Caco-2 (cell line): ENCODE measurements at regions of chr6 and their contacts with region 1.

Region 1: DNA sequence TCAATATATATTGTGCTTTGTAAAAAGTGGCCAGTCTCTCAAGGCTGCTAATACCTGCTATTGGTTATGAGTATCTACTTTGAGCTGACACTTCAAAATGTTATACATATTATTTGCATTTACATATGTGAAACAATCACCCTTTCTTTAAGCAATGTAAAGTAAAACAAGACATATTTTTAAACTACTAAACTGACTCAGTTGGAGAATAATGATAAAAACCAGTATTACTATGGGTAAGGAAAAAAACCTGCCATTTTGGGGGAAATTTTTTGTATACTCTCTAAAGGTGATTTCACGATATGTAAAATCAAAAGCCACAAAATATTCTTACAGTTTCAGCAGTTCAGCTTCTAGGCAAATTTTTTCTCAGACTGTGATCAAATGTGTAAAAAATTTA is 232.3 kb downstream of the PRL start:
- DNase-seq: no peak
- H3K4me3 ChIP-seq: no peak overlapping the region
- H3K4me3 Mint-ChIP-seq: no peak overlapping the region
- H3K27ac Mint-ChIP-seq: no peak overlapping the region
- H3K4me1 ChIP-seq: no peaks in the 10 kb centered on the region
- H3K4me1 Mint-ChIP-seq: no peaks in the 10 kb centered on the region
- H3K27me3 ChIP-seq: no peaks in the 10 kb centered on the region
- H3K27me3 Mint-ChIP-seq: no peaks in the 10 kb centered on the region
- CTCF ChIP-seq: no peak

Region 2: GRCh38 chr6:22017272-22017671 is 47.3 kb before region 1 on chr6:
- CTCF ChIA-PET with region 1: no interaction called
- POLR2A ChIA-PET with region 1: no interaction called
- intact Hi-C with region 1: no loop called
- DNase-seq: no peak
- H3K4me3 ChIP-seq: no peak overlapping the region
- H3K4me3 Mint-ChIP-seq: no peak overlapping the region
- H3K27ac Mint-ChIP-seq: no peak overlapping the region
- H3K4me1 ChIP-seq: no peaks in the 10 kb centered on the region
- H3K4me1 Mint-ChIP-seq: no peaks in the 10 kb centered on the region
- H3K27me3 ChIP-seq: no peaks in the 10 kb centered on the region
- H3K27me3 Mint-ChIP-seq: no peaks in the 10 kb centered on the region
- CTCF ChIP-seq: no peak

Region 3: DNA sequence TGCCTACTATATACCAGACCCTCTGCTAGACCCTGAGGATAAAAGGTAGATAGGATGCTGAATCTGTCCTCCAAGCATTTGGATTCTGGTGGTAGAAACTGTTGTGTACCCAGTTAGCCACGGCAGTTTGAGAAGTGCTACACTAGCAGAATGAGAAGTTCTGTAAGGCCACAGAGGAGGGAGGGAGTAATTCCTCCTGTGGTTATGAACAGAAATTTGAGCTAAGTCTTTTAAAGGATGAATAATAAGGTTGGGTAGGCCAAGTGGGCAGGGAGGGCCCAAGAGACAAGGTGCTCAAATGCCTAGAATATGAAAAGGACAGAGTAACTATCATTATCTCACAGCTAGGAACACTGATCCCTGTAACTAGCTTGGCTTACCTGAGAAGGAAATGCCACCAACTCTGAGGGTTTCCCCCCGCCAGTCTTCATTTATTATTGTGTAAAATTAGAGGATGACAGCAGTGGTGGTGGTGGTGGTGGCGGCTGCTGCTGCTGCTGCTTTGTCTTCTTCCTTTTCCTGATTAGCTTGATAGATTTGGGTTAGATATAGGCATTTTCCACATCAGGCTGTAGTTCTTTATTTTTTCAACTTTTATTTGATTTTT is 11.1 kb before region 1 on chr6:
- CTCF ChIA-PET with region 1: no interaction called
- POLR2A ChIA-PET with region 1: interaction called, 10 read pairs
- intact Hi-C with region 1: no loop called
- DNase-seq: no peak
- H3K4me3 ChIP-seq: no peak overlapping the region
- H3K4me3 Mint-ChIP-seq: no peak overlapping the region
- H3K27ac Mint-ChIP-seq: no peak overlapping the region
- H3K4me1 ChIP-seq: no peaks in the 10 kb centered on the region
- H3K4me1 Mint-ChIP-seq: no peaks in the 10 kb centered on the region
- H3K27me3 ChIP-seq: no peaks in the 10 kb centered on the region
- H3K27me3 Mint-ChIP-seq: no peaks in the 10 kb centered on the region
- CTCF ChIP-seq: no peak